Natural killer cell (primary cell): ENCODE measurements at regions of chr14 and their contacts with region 1.

Region 1: GRCh38 chr14:61461808-61462275 is 140.5 kb downstream of the PRKCH start:
- DNase-seq: peak in 1 of 2 donors; percentile 84
- ATAC-seq: peak; percentile 60 to 70 (median 66)
- H3K4me3 ChIP-seq: no peak overlapping the region
- H3K4me3 Mint-ChIP-seq: peak overlapping the region; percentile 41
- H3K27ac ChIP-seq: no peak overlapping the region
- H3K27ac Mint-ChIP-seq: no peak overlapping the region
- H3K4me1 ChIP-seq: peaks cover 27% of the 10 kb centered on the region
- H3K4me1 Mint-ChIP-seq: peaks cover 60 to 72% of the 10 kb centered on the region in 2 donors
- H3K27me3 ChIP-seq: no peaks in the 10 kb centered on the region
- H3K27me3 Mint-ChIP-seq: no peaks in the 10 kb centered on the region
- CTCF ChIP-seq: peak; percentile 78

Region 2: DNA sequence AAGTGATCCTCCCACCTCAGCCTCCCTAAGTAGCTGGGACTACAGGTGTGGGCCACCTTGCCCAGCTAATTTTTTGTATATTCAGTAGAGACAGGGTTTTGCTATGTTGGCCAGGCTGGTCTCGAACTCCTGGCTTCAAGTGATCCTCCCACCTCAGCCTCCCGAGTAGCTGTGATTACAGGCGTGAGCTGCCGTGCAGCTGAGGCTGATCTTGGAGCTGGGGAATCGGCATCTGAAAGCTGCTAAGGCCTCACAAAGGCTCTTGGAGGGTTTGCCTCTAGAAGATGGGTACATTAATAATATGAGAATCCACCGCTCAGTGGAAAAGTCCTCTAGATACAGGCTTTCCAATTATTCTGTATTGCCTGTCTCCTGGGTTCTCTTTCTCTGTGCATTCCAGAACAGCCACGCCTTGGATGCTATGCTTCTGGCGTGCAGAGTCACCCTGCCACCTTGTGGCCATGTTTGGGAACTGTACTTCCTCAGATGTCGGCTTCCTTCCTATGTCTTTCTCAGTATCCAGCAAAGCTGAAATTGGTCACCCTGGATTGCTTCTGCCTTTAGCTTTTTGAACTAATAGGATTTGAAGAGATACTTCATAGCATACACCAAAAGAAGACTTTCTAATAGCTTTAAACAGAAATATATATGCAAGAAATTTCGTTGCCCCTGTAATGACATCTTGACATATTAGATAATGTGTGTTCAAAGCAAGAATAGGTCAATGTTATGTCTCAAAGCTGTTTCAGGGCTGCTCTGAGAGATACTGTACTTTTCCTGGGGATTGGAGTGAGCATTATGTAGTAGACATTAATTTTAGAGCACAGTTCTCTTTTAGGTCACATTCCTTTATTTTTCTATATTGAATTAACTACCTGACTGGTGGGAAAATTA is 375.7 kb after region 1 on chr14:
- intact Hi-C with region 1: loop called (anchors 1 kb)
- DNase-seq: peak; percentile 58 to 90
- ATAC-seq: peak; percentile 90 to 98 (median 98)
- H3K4me3 ChIP-seq: no peak overlapping the region
- H3K4me3 Mint-ChIP-seq: no peak overlapping the region
- H3K27ac ChIP-seq: no peak overlapping the region
- H3K27ac Mint-ChIP-seq: no peak overlapping the region
- H3K4me1 ChIP-seq: no peaks in the 10 kb centered on the region
- H3K4me1 Mint-ChIP-seq: no peaks in the 10 kb centered on the region
- H3K27me3 ChIP-seq: no peaks in the 10 kb centered on the region
- H3K27me3 Mint-ChIP-seq: peaks cover 21 to 32% of the 10 kb centered on the region in 2 donors
- CTCF ChIP-seq: peak; percentile 90